Panc1 (cell line): ENCODE measurements at regions of chr11 and their contacts with region 1.

Region 1: DNA sequence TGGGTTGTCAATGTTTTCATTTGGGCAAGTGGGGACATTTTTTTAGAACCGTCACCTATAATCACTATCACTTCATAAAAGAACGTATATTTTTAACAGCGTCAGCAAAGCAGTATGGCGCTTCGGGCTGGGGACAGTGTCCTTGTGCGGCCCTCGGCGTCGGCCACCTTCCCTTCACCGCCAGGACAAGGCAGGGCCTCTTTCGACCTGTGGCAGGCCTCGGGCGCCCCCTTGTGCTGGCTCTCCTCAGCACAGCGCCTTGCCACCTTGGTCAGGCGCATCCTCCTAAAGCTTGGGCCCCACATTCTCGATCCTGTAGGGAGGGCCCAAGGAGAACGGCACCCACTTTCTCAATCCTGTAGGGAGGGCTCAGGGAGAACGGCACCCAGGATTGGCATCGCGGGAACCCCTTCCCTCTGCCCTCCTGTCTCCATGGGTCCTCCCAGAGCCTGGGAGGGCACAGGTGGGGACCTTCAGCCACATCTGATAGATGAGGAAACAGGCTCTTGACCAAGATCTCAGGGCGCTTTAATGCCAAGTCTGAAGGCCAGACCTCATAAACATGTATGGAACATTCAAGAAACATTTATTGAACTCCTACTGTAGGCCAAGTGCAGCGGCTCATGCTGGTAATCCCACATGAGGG is 11.5 kb upstream of the FADD start:
- DNase-seq: no peak
- ATAC-seq: peak; percentile 96
- H3K4me3 ChIP-seq: no peak overlapping the region
- H3K27ac ChIP-seq: no peak overlapping the region
- H3K4me1 ChIP-seq: no peaks in the 10 kb centered on the region
- H3K27me3 ChIP-seq: no peaks in the 10 kb centered on the region
- CTCF ChIP-seq: peak; percentile 98

Region 2: GRCh38 chr11:69683764-69684333 is 507.8 kb before region 1 on chr11:
- CTCF ChIA-PET with region 1: no interaction called
- POLR2A ChIA-PET with region 1: no interaction called
- in situ Hi-C with region 1: no loop called
- intact Hi-C with region 1: loop called (anchors 5 kb)
- DNase-seq: no peak
- ATAC-seq: peak; percentile 73
- H3K4me3 ChIP-seq: no peak overlapping the region
- H3K27ac ChIP-seq: no peak overlapping the region
- H3K4me1 ChIP-seq: no peaks in the 10 kb centered on the region
- H3K27me3 ChIP-seq: no peaks in the 10 kb centered on the region
- CTCF ChIP-seq: peak; percentile 94

Region 3: GRCh38 chr11:69867738-69868493 is 323.7 kb before region 1 on chr11:
- CTCF ChIA-PET with region 1: no interaction called
- POLR2A ChIA-PET with region 1: no interaction called
- in situ Hi-C with region 1: no loop called
- intact Hi-C with region 1: no loop called
- DNase-seq: no peak
- ATAC-seq: no peak
- H3K4me3 ChIP-seq: no peak overlapping the region
- H3K27ac ChIP-seq: no peak overlapping the region
- H3K4me1 ChIP-seq: no peaks in the 10 kb centered on the region
- H3K27me3 ChIP-seq: no peaks in the 10 kb centered on the region
- CTCF ChIP-seq: no peak

Region 4: DNA sequence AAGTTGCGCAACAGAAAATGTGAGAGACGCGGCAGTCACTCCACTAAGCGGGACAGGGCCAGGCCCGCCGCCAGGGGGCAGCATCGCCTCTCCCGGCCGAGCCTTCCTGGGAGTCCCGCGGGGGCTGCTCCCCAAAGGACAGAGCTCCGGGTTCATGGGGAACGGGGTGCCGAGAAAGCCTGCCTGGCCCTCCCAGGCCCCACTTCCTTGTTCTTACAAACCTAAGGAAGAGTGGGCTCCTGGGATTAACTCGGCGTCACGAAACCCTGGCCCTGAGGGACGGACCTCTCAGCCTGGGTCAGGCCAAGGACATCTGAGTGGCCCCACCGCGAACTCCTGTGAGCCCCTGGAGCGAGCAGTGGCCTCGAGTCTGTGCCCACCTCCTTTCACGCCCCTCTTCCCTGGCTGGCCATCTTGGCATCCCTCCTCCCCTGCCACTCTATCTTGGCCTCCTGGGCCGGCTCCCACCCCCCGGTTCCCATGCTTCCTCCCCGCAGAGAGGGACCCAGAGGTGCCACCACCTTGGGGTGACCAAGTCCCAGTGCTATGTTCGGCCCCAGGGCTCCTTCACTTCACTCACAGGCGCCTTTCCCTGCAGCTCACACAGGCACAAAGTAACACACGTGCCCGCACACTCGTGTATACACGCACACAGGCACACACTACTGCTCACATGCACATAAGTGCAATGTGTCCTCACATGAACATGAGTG is 272.5 kb before region 1 on chr11:
- CTCF ChIA-PET with region 1: interaction called, 10 read pairs
- POLR2A ChIA-PET with region 1: no interaction called
- in situ Hi-C with region 1: no loop called
- intact Hi-C with region 1: loop called (anchors 1 kb)
- DNase-seq: no peak
- ATAC-seq: peak; percentile 83
- H3K4me3 ChIP-seq: peak overlapping the region in 1 of 2 experiments; percentile 16; a peak in 1 of 4 replicates
- H3K27ac ChIP-seq: no peak overlapping the region
- H3K4me1 ChIP-seq: peaks cover 24% of the 10 kb centered on the region
- H3K27me3 ChIP-seq: peaks cover 4% of the 10 kb centered on the region; the same call in 1 of the 2 replicates
- CTCF ChIP-seq: peak; percentile 99

Region 5: GRCh38 chr11:69950120-69950519 is 241.5 kb before region 1 on chr11:
- CTCF ChIA-PET with region 1: no interaction called
- POLR2A ChIA-PET with region 1: no interaction called
- in situ Hi-C with region 1: loop called (anchors 25 kb)
- intact Hi-C with region 1: no loop called
- DNase-seq: no peak
- ATAC-seq: no peak
- H3K4me3 ChIP-seq: no peak overlapping the region
- H3K27ac ChIP-seq: peak overlapping the region; percentile 40; the same call in 1 of the 2 replicates
- H3K4me1 ChIP-seq: peaks cover 15% of the 10 kb centered on the region
- H3K27me3 ChIP-seq: no peaks in the 10 kb centered on the region
- CTCF ChIP-seq: no peak; the same call in 1 of the 2 replicates

Region 6: DNA sequence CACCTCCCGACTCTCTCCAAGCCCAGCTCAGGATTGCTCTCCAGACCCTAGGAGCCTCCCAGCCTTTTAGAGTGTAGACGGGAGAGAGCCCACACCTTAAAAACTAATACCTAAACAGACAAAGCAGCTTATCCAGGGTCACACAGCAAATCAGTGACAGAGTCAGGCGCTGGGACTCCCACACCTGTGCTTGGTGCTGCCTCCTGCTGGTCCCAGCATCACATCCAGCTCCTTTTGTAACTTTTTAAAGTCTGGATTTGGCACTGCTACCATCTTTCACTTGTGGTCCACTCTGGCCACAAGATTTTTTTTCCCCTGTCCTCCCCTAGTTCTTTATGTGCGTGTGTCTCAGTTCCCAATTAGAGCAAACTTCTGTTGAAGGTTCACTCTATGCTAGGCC is 108.8 kb before region 1 on chr11:
- CTCF ChIA-PET with region 1: interaction called, 5 read pairs
- POLR2A ChIA-PET with region 1: no interaction called
- in situ Hi-C with region 1: no loop called
- intact Hi-C with region 1: loop called (anchors 5 kb)
- DNase-seq: no peak
- ATAC-seq: no peak
- H3K4me3 ChIP-seq: no peak overlapping the region
- H3K27ac ChIP-seq: no peak overlapping the region
- H3K4me1 ChIP-seq: no peaks in the 10 kb centered on the region
- H3K27me3 ChIP-seq: peaks cover 9% of the 10 kb centered on the region
- CTCF ChIP-seq: peak; percentile 72; the same call in 1 of the 2 replicates